Gastrocnemius medialis (tissue), 4 donors: ENCODE measurements at regions of chr10 and their contacts with region 1.

Region 1: DNA sequence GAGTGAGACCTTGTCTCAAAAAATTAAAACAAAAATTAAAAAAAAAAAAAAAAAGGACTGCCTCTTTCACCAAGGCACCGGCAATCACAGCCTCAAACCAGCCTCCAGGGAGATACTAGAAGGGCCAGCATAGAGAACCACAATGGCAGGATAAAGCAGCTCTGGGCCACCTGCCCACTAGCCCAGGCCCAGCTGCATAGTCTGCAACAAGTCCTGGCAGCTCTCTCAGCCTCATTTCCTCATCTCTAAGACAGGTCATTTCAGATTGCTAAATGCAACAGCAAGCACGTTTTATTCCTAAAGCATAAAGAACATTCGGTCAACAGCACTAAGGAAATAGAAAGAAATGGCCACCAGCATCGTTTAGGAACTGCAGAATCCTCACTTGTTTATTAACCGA is 28.8 kb downstream of the XPNPEP1 start:
- DNase-seq: peak; percentile 83 to 92
- ATAC-seq: peak; percentile 91 to 93
- H3K4me3 ChIP-seq: no peak overlapping the region
- H3K27ac ChIP-seq: peak overlapping the region; percentile 66 to 73 (median 72)
- H3K4me1 ChIP-seq: peaks cover 36 to 55% of the 10 kb centered on the region in 2 donors
- H3K27me3 ChIP-seq: no peaks in the 10 kb centered on the region
- CTCF ChIP-seq: no peak
- POLR2A ChIP-seq: peak in 1 of 2 donors; percentile 16

Region 2: GRCh38 chr10:109762555-109762954 is 132.0 kb before region 1 on chr10:
- in situ Hi-C with region 1: no loop called
- intact Hi-C with region 1: no loop called
- DNase-seq: no peak
- ATAC-seq: no peak
- H3K4me3 ChIP-seq: no peak overlapping the region
- H3K27ac ChIP-seq: no peak overlapping the region
- H3K4me1 ChIP-seq: no peaks in the 10 kb centered on the region
- H3K27me3 ChIP-seq: no peaks in the 10 kb centered on the region
- CTCF ChIP-seq: no peak
- POLR2A ChIP-seq: no peak

Region 3: DNA sequence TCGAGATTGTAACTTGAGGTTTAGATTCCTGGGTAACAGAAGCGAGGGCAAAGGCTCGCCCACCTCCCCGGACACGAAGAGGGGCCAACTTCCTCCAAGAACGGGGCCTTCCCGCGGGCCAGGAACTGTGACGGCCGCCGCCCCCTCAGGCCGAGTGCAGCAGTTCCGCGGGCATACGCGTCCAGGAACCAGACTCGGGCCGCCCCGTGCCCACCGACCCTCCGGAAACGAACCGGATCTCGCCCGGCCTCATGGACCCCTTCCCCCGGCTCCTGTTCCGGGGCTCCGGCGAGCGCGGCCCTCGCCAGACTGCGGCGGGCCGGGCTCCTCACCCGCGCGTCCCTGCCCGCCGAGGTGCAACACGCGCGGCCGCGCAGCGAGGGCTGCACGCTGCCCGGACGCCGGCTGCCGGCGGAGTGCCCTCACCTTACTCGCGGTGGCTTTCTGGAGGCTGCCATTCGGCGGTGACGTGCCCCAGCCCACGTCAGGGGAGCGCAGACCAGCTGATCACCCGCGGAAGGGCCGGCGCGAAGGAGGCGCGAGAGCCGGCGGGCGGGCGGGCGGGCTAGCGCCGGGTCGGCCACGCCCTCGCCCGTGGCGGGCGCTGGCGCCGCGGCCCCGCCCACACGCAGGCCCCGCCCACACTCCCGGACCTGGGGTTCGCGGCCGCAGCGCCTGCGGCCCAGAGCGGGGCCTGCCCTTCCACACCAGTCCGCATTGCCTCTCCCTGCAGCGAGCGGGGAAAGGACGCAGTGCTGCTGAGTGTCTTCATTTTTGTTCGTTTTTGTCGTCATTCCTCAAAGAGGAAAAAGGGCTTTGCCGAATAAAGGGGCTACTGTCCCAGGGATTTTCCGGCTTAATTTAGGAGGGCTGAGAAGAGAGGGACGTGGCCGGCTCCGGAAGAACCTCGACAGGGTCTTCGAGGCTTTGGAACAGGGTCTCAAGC is 28.7 kb after region 1 on chr10 and contains the start of gene XPNPEP1:
- in situ Hi-C with region 1: no loop called
- intact Hi-C with region 1: loop called (anchors 2 kb)
- DNase-seq: peak; percentile 81 to 84
- ATAC-seq: peak; percentile 95 to 96
- H3K4me3 ChIP-seq: peak within 1 kb of the TSS; percentile 75 to 92 (median 87)
- H3K27ac ChIP-seq: peak within 1 kb of the TSS; percentile 88 to 94 (median 93)
- H3K4me1 ChIP-seq: peaks cover 11 to 14% of the 10 kb centered on the region in 2 donors
- H3K27me3 ChIP-seq: no peaks in the 10 kb centered on the region
- CTCF ChIP-seq: no peak
- POLR2A ChIP-seq: peak; percentile 92 to 95
- total RNA-seq, gene XPNPEP1: 39.9 to 72.3 (median 64.0) TPM

Region 4: GRCh38 chr10:109934958-109935706 is 40.6 kb after region 1 on chr10:
- in situ Hi-C with region 1: no loop called
- intact Hi-C with region 1: no loop called
- DNase-seq: no peak
- ATAC-seq: no peak
- H3K4me3 ChIP-seq: no peak overlapping the region
- H3K27ac ChIP-seq: peak overlapping the region; percentile 20 to 60 (median 26)
- H3K4me1 ChIP-seq: peaks cover 15 to 23% of the 10 kb centered on the region in 2 donors
- H3K27me3 ChIP-seq: no peaks in the 10 kb centered on the region
- CTCF ChIP-seq: no peak
- POLR2A ChIP-seq: no peak

Region 5: DNA sequence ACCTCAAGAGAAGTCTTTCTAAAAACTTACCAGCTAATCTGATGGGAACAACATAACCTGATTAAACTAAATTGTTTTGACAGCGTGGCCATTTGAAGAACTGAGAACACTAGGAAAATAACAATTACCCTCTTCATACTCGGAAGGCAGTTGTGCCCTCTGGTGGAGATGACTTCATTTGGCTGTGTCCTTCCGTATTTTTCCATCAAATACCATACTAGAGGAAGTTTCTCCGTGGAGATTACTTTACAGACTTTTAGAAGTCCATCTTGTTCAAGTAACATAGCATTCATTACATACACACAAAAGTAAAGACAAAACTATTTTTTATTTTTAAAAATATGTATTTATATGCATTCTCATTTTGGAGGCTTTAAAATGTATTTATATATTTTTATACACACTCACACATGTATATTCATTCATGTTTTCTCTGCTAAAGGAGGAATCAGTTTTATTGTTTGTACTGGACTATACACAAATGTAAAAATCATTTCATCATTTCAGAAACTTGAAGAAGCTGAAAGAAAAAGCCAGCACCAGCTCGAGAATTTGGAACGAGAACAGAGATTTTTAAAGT is 385.0 kb after region 1 on chr10:
- in situ Hi-C with region 1: loop called in 3 of 4 experiments (anchors 10 to 25 kb)
- intact Hi-C with region 1: loop called (anchors 10 kb)
- DNase-seq: peak; percentile 12 to 40
- ATAC-seq: peak; percentile 69 to 87
- H3K4me3 ChIP-seq: no peak overlapping the region
- H3K27ac ChIP-seq: peak overlapping the region in 1 of 4 donors; percentile 1
- H3K4me1 ChIP-seq: peaks cover 18 to 26% of the 10 kb centered on the region in 2 donors
- H3K27me3 ChIP-seq: no peaks in the 10 kb centered on the region
- CTCF ChIP-seq: peak; percentile 69 to 78 (median 74)
- POLR2A ChIP-seq: no peak

Region 6: DNA sequence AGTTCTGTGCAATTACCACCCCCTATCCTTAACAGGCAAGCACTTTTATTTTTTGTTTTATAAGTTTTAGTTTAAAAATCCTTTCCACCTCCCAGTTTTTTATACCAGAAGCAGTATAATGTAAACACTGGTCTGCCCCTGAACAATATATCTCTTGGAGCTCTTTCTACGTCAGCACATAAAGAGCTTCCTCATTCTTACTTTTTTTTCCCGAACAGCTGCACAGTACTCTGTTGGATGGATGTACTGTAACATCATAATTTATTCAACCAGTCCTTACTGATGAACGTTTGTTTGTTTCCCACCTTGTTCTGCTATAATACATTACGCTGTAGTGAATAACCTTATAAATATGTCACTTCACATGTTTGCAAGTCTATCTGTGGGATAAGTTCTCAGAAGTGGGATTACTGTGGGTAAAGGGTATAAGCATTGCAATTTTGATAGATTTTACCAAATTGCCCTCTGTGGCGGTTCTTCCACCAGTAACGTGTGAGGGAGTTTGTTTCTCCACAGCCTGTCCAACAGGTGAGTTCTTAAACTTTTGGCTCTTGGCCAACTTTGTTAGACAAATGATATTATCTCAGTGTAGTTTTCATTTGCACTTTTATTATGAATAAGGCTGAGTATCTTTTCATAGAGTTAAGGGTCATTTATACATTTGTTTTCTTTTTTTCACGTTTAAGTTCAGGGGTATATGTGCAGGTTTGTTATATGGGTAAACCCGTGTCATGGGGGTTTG is 1215.2 kb after region 1 on chr10:
- in situ Hi-C with region 1: no loop called
- intact Hi-C with region 1: no loop called
- DNase-seq: no peak
- ATAC-seq: no peak
- H3K4me3 ChIP-seq: no peak overlapping the region
- H3K27ac ChIP-seq: no peak overlapping the region
- H3K4me1 ChIP-seq: no peaks in the 10 kb centered on the region
- H3K27me3 ChIP-seq: no peaks in the 10 kb centered on the region
- CTCF ChIP-seq: no peak
- POLR2A ChIP-seq: no peak